ENCODE measurements at regions of chr2 and their contacts with region 1.

Region 1: GRCh38 chr2:172102391-172103278 is at the start of gene DLX2:
- DNase-seq: peak; percentile 71
- H3K4me3 Mint-ChIP-seq: peak within 1 kb of the TSS; percentile 74
- H3K27ac Mint-ChIP-seq: no peak within 1 kb of the TSS
- H3K4me1 Mint-ChIP-seq: peaks cover 57% of the 10 kb centered on the region
- H3K27me3 Mint-ChIP-seq: peaks cover 73% of the 10 kb centered on the region
- total RNA-seq, gene DLX2: not detected

Region 2: GRCh38 chr2:171706152-171706803 is 396.4 kb before region 1 on chr2:
- CTCF ChIA-PET with region 1: interaction called, 11 read pairs
- POLR2A ChIA-PET with region 1: no interaction called
- DNase-seq: no peak
- H3K4me3 Mint-ChIP-seq: no peak overlapping the region
- H3K27ac Mint-ChIP-seq: no peak overlapping the region
- H3K4me1 Mint-ChIP-seq: peaks cover 5% of the 10 kb centered on the region
- H3K27me3 Mint-ChIP-seq: no peaks in the 10 kb centered on the region

Region 3: DNA sequence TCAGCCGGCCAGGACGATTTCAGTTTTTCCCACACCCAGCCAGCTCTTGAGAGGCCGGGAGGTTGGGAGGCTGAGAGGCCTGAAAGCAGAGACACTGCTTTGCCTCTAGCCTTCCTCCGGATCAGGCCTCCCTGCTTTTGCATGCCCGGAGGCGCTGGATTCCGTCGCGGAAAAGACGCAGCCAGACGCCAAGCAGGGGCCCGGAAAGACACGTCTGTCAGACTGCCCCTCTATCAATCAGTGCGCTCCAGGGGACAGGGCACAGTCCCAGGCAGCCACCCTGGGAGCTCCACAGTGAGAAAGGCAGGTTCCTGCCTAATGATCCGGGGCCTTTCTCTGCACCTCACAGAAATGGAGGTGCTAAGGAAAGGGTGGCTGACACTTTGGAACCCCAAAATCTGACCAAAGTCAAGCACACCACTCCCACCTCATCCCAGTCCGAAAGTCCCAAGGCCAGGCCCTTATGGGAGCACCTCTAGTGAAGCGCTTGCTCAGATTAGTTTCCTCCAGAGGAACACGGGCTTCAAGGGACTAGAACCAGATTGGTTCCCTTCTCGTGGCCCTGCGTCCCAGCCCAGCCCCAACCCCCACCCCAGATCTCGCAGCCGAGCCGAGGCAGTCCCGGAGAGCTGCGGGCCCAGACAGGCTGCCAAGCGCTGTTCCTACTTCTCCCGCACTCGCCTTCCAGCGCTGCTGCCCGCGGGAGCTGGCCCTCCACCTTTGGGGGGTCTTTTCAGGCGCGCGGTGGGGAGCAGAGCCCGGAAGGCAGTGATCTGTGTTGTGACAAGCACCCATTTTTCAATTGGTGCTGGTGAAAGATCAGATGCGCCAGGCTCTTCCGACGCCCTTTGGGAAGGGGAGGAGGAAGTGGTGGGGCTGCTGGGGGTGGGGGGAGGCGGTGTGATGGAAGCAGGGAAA is 12.3 kb before region 1 on chr2:
- CTCF ChIA-PET with region 1: interaction called, 45 read pairs
- POLR2A ChIA-PET with region 1: no interaction called
- DNase-seq: peak; percentile 4
- H3K4me3 Mint-ChIP-seq: no peak overlapping the region
- H3K27ac Mint-ChIP-seq: peak overlapping the region; percentile 62
- H3K4me1 Mint-ChIP-seq: peaks cover 50% of the 10 kb centered on the region
- H3K27me3 Mint-ChIP-seq: peaks cover 90% of the 10 kb centered on the region

Measured in activated CD4-positive, alpha-beta T cell treated with anti-CD3 and anti-CD28 coated beads, Interleukin-2, amount 10 ng/mL, durations not matched to agents 7 days and 5 days (primary cell).